Activated T-helper 2 cell treated with anti-CD3 and anti-CD28 coated beads, Interferon-gamma antibody, Interleukin-2, Interleukin-4, amounts not matched to agents 10 μg/mL and 5 μg/mL and 100 μg/mL, durations not matched to agents 14 hours and 24 hours and 36 hours (primary cell): ENCODE measurements at regions of chr3 and their contacts with region 1.

Region 1: DNA sequence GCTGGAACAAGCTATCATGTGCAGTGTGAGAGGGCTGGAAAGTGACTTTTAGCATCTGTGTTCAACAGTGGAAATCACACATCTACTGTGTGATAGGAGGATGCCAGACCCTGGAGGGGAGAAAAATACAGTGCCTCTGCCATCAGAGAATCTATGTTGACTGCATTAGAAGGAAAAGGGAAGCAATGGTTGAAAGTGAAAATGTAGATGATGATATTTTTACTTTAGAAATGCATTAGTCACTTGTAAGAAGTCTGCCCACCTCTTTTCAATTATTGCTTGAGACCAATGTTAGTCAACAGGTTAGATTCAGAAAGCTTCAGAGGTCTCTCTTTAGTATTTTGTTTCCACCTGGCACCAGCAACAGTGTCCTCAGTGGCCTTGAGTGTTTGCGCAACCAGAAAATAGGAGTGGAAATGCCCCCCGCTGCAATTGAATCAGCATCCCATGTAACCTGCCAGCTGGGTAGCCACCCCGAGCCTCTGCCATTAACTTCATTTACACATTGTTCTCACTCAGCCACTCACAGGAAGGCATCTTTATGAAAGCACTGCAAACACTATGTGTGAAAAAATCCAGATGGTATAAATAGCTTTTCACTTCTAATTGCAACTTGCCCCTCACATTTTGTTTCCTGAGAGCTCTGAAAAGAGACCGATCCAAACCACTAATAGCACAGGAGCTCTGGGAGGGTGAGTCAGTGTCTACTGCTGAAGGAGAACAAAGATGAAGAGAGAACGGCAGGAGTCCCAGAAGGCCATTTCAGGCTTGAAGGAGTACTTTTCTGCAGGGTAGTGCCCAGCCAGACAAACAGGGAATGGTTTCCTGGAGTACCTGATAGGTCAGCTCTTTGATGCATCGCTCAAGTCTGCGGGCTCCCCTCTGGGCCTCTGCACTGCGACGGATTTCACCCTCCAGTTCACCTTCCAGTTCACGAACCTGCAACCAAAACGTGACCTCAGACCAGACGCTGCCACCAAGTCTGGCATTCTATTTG is 92.1 kb downstream of the HHLA2 start:
- DNase-seq: no peak
- H3K4me3 Mint-ChIP-seq: no peak overlapping the region
- H3K27ac Mint-ChIP-seq: peak overlapping the region; percentile 67
- H3K4me1 Mint-ChIP-seq: peaks cover 23% of the 10 kb centered on the region
- H3K27me3 Mint-ChIP-seq: peaks cover 19% of the 10 kb centered on the region

Region 2: DNA sequence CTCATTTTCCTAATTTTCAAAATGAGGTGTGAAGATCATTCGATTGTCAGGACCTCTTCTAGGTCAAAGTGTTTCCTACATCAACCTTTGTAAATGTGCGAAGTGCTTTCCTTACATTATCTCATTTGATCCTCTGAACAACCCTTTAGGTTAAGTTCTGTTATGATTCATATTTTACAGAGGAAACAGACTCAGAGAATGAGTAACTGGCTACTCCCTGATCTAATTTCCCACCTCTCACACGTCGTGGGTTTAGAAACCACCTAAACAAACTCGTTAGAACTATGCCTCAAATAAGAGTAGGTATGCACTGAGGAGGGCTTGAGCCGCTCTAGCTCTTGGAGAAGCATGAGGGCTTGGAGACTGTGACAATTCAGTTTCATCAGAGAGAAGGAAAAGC is 446.2 kb before region 1 on chr3:
- intact Hi-C with region 1: loop called (anchors 2 kb)
- DNase-seq: peak; percentile 15
- H3K4me3 Mint-ChIP-seq: no peak overlapping the region
- H3K27ac Mint-ChIP-seq: peak overlapping the region; percentile 78
- H3K4me1 Mint-ChIP-seq: peaks cover 23% of the 10 kb centered on the region
- H3K27me3 Mint-ChIP-seq: peaks cover under 1% of the 10 kb centered on the region

Region 3: GRCh38 chr3:107987036-107987947 is 401.1 kb before region 1 on chr3:
- intact Hi-C with region 1: no loop called
- DNase-seq: no peak
- H3K4me3 Mint-ChIP-seq: no peak overlapping the region
- H3K27ac Mint-ChIP-seq: no peak overlapping the region
- H3K4me1 Mint-ChIP-seq: peaks cover 15% of the 10 kb centered on the region
- H3K27me3 Mint-ChIP-seq: no peaks in the 10 kb centered on the region

Region 4: DNA sequence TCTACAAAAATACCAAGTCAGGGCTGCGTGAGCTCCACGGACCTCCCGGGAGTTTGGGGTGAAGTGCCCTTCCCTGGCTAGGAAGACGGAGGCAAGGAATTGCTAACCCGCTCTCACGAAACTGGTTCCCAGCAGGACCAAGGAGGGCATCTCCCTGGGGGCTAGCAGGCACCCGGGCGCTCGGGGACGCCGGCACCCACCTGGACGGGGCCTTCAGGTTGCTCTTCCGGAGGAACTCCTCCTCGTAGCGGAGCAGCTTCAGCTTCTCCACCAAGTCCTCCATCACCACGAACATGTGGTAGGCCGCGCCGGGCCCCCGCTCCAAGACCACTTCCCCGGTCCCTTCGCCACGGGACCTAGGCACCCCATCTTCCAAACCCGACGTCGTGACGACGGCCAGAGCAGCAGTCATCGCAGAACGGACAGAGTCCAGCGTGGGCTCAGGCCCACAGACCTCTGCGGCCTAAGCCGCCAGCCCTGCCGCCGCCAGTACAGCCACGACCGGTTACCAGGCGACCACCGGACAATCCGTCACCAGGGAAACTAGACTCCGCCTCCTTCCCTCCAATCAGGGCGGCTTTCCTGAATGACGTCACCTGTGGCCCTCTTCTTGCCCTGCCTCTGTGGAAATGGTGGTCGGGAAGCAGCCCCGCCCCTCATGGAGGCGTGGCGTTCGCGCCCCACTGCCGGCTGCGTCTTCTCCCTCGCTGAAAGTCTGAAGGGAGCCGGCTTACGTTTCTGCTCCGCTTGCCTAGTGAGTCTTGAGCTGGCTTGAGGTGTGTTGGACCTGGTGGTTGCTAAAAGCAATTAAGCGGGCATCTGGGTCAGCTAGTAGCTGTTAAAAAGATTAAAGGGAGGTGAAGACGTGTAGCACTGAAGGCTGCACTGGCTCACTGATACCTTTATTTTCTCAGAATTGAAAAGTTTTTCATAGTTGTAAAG is 166.3 kb before region 1 on chr3 and contains the start of gene IFT57:
- intact Hi-C with region 1: loop called (anchors 1 kb)
- DNase-seq: peak; percentile 93
- H3K4me3 Mint-ChIP-seq: peak within 1 kb of the TSS; percentile 94
- H3K27ac Mint-ChIP-seq: peak within 1 kb of the TSS; percentile 89
- H3K4me1 Mint-ChIP-seq: peaks cover 41% of the 10 kb centered on the region
- H3K27me3 Mint-ChIP-seq: peaks cover 2% of the 10 kb centered on the region
- total RNA-seq, gene IFT57: 21.6 and 22.0 TPM in 2 replicates

Region 5: DNA sequence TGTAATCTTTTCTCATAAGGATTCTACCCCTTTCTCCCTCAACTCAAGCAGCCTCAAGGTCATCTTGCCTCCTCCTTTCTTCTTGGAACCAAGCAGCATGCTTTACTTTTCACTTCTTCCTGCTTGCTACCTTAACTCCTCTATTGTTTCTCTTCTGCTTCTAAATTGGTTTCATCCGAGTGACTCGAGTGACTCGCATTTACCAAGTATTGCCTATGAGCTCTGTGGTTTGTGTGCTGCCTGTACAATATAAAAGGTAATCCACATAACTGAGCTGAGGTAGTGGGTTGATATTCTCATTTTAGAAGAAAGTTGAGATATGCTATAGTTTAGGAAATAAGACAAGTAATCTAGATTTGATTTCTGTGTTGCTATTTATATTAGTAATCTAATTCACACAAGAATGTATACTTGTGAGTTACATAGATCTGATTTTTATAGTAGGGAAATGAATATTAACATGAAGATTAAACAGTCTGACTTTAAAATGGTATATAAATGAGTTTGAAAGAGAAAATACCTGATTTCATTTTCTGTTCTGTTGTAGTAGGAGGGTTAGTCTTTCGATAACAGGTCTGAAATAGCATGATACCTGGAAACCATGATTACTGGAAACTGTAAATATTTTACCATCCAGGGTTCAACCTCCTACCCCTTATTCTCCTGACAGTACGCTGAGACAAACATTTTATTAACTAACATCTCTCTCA is 86.6 kb before region 1 on chr3:
- intact Hi-C with region 1: loop called (anchors 2 kb)
- DNase-seq: no peak
- H3K4me3 Mint-ChIP-seq: peak overlapping the region; percentile 37
- H3K27ac Mint-ChIP-seq: peak overlapping the region; percentile 81
- H3K4me1 Mint-ChIP-seq: peaks cover 50% of the 10 kb centered on the region
- H3K27me3 Mint-ChIP-seq: no peaks in the 10 kb centered on the region

Region 6: DNA sequence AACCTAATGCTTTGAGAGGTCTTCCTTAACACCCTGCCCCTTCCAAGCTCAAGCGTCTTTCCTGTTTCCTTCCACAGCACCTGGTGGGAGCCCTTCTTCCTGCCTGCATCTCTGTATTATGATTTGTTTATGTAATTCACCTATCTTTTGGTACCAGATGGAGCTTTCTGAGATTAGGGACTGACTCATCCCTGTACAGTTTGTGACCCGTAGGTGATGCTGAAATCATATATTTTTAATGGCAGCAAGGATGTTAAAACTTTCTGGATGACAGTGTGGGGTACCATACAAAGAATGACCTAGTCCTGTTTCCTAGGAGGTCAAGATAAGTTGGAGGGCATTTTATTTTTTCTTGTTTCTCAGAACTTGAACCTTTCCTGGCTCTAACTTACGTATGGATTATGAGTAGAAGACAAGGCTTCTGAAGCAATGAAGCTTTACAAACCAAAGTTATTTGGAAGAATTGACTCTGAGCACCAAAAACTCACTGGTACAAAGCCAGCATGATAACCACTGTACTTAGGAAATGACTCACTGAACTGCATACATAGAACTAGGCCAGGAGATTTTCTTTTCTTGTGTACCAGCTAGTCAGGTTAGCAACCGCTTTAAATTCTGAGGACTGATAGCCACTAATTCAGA is 45.5 kb before region 1 on chr3:
- intact Hi-C with region 1: loop called (anchors 1 kb)
- DNase-seq: no peak
- H3K4me3 Mint-ChIP-seq: no peak overlapping the region
- H3K27ac Mint-ChIP-seq: peak overlapping the region; percentile 28
- H3K4me1 Mint-ChIP-seq: peaks cover 18% of the 10 kb centered on the region
- H3K27me3 Mint-ChIP-seq: peaks cover 21% of the 10 kb centered on the region

Region 7: DNA sequence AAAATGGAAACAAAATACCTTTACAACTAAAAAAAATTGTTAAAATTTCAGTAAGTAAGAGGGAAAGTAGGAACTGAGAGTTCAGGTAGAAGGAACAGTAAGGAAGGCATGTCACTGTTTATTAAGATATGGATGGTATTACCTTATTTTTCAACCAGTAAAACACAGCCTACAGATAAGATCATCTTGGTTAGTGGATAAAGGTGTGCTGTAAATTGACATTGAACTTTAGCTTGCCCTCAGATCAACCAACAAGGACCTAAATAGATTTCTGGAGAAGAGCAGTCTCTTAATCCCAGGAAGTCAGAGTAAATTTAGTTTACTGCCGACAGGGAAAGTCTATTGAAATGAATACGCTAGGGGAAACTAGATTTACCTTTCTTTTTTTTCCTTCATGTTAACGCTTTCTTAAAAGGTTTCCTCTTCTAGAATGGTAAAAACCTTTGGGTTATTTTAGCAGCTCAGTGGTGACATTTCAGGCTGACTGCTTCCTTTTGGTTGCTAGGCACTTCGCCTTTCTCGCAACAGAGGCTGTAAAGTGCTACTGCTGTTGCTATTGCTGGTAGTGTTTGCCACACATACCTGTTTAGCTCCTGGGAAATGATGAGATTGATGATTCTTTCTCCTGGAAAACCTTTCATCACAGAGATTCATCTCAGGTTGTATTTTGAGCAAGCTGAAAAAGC is 214.0 kb after region 1 on chr3:
- intact Hi-C with region 1: no loop called
- DNase-seq: no peak
- H3K4me3 Mint-ChIP-seq: no peak overlapping the region
- H3K27ac Mint-ChIP-seq: peak overlapping the region; percentile 71
- H3K4me1 Mint-ChIP-seq: peaks cover 55% of the 10 kb centered on the region
- H3K27me3 Mint-ChIP-seq: no peaks in the 10 kb centered on the region